ENCODE measurements at regions of chr19 and their contacts with region 1.

Region 1: GRCh38 chr19:23969630-23970029 is 54.9 kb downstream of the ZNF726 start:
- DNase-seq: no peak
- ATAC-seq: no peak
- H3K4me3 ChIP-seq: no peak overlapping the region
- H3K4me3 Mint-ChIP-seq: no peak overlapping the region
- H3K27ac ChIP-seq: no peak overlapping the region
- H3K27ac Mint-ChIP-seq: no peak overlapping the region
- H3K4me1 ChIP-seq: peaks cover 8% of the 10 kb centered on the region
- H3K4me1 Mint-ChIP-seq: no peaks in the 10 kb centered on the region
- H3K27me3 ChIP-seq: peaks cover 19 to 27% of the 10 kb centered on the region in 2 experiments
- H3K27me3 Mint-ChIP-seq: peaks cover 50% of the 10 kb centered on the region
- CTCF ChIP-seq: no peak

Region 2: DNA sequence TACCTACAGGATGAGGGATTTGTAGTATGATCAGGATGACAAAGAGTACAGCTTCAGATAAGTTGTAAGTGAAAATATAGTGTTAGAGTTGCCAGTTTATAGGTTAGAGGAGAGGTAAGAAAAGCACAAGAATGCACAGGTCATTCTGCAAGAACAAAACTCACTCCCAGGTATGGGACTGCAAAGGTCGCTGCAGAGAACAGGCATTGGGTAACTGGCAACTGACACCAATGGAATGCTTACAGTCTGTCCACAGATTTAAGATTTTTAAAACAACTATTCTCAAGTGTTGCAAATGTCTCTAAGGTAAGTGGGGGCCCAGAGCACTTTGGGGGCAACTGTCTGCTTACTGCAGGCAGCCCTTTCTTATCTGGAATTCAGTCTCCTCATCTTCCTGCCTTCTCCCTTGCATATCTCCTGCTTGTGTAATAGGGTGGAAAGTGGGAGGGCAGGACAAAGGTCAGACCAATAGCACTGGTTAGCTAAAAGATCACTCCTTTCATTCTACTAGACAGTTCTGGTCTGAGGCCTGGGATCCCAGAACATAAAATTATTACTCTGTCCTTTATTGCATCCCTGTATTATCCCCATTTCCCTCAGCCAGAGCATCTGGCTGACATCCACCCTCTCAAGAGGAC is 97.2 kb before region 1 on chr19:
- CTCF ChIA-PET with region 1: no interaction called
- POLR2A ChIA-PET with region 1: no interaction called
- intact Hi-C with region 1: loop called in 1 of 2 experiments (anchors 2 kb)
- DNase-seq: no peak
- ATAC-seq: no peak
- H3K4me3 ChIP-seq: no peak overlapping the region
- H3K4me3 Mint-ChIP-seq: no peak overlapping the region
- H3K27ac ChIP-seq: no peak overlapping the region
- H3K27ac Mint-ChIP-seq: no peak overlapping the region
- H3K4me1 ChIP-seq: no peaks in the 10 kb centered on the region
- H3K4me1 Mint-ChIP-seq: no peaks in the 10 kb centered on the region
- H3K27me3 ChIP-seq: no peaks in the 10 kb centered on the region
- H3K27me3 Mint-ChIP-seq: peaks cover 10% of the 10 kb centered on the region
- CTCF ChIP-seq: no peak